Heart right ventricle (tissue), 16 donors: ENCODE measurements at regions of chr14 and their contacts with region 1.

Region 1: DNA sequence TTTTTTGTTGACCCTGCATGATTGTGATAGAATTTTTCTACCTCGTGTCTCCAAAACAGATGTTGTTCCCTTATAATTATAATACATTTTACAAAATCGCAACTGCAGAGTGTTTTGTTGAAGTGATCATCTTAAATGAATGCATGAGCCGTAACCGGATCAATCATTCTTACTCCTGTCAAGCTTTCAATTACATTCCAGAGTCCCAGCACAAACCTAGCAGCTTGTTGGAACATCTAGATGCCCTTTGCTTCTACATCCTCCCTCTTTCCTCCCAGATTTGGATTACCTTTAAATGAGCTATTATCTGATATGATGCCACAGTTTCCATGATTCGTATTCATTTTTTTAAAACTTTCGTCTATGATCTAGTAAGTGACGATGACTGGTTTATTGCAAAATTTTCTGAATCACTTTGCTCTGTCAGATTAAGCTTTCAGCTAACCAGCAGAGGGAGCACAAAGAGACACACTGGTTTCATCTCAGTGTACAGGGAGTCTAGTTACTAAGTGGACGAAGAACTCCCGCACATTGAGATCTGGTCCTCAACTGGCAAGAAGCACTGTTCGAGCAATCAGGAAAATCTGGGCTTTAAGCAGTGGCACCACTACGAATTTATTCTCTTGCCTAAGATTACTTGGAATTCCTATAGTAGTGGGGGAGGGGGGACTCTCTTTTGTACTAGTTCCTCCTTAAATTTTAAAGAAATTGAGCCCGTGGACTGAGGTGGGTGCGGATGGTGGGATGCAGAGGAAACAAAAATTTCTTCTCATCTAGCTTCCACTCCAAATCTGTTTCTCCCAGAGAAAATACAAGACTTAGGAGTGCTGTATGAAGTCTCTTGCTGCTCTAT is 40.9 kb downstream of the TSHR start:
- DNase-seq: peak in 1 of 2 donors; percentile 59
- ATAC-seq: peak; percentile 72 to 95 (median 90)
- H3K4me3 ChIP-seq: no peak overlapping the region
- H3K27ac ChIP-seq: no peak overlapping the region
- H3K4me1 ChIP-seq: peaks cover 0 to 12% (median 0%) of the 10 kb centered on the region in 9 donors
- H3K27me3 ChIP-seq: peaks cover 0 to 17% (median 0%) of the 10 kb centered on the region in 7 donors
- CTCF ChIP-seq: peak in 8 of 9 donors; percentile 40 to 77 (median 68)

Region 2: DNA sequence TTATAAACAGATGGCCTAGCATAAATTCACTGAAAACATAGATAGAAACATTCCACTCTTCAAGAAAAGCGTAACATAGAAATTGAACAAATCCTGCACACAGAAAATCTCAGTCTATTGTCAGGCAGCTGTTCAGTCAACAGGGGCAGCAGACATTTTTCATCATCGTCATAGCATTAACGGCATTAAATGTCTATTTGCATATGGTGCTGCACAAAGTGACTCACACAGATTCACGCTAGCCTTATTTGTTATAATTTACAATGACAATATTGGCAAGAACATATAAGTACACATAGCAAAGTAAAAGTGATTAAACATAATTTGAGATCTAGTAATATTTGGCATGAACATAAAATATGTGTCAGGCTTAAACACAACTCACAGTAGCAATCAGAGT is 150.4 kb before region 1 on chr14:
- intact Hi-C with region 1: no loop called
- DNase-seq: no peak
- ATAC-seq: no peak
- H3K4me3 ChIP-seq: no peak overlapping the region
- H3K27ac ChIP-seq: no peak overlapping the region
- H3K4me1 ChIP-seq: peaks cover 0 to 13% (median 0%) of the 10 kb centered on the region in 9 donors
- H3K27me3 ChIP-seq: no peaks in the 10 kb centered on the region
- CTCF ChIP-seq: no peak

Region 3: GRCh38 chr14:80954687-80955299 is 41.5 kb before region 1 on chr14:
- intact Hi-C with region 1: no loop called
- DNase-seq: peak; percentile 70 to 82
- ATAC-seq: peak; percentile 89 to 96 (median 93)
- H3K4me3 ChIP-seq: peak overlapping the region; percentile 32 to 64 (median 53)
- H3K27ac ChIP-seq: peak overlapping the region in 1 of 10 donors; percentile 62
- H3K4me1 ChIP-seq: peaks cover 0 to 24% (median 9%) of the 10 kb centered on the region in 9 donors
- H3K27me3 ChIP-seq: peaks cover 0 to 29% (median 15%) of the 10 kb centered on the region in 7 donors
- CTCF ChIP-seq: peak; percentile 75 to 88 (median 79)

Region 4: DNA sequence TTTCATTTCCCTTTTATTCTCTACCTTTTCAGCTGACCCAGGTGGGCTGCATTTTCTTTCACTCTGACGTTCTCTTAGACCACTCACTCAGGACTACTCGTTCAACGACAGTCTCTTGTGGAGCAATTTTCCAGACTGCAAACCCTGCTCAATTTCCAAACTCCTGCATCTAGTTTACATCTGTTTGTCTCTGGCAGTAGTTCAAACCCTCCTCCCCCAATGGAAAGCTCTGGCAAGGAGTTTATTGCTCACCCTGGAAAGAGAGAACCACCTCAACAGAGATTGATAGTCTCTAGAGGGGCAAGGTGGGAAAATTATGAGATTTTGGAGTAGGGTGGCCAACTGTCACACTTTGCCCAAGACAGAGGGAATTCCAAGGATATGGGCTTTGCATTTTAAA is 89.3 kb after region 1 on chr14:
- intact Hi-C with region 1: no loop called
- DNase-seq: no peak
- ATAC-seq: no peak
- H3K4me3 ChIP-seq: no peak overlapping the region
- H3K27ac ChIP-seq: no peak overlapping the region
- H3K4me1 ChIP-seq: no peaks in the 10 kb centered on the region
- H3K27me3 ChIP-seq: no peaks in the 10 kb centered on the region
- CTCF ChIP-seq: no peak

Region 5: GRCh38 chr14:81164167-81164774 is 168.0 kb after region 1 on chr14:
- intact Hi-C with region 1: loop called in 4 of 10 experiments (anchors 2 to 10 kb)
- DNase-seq: peak in 1 of 2 donors; percentile 44
- ATAC-seq: peak; percentile 61 to 95 (median 90)
- H3K4me3 ChIP-seq: no peak overlapping the region
- H3K27ac ChIP-seq: peak overlapping the region in 1 of 10 donors; percentile 23
- H3K4me1 ChIP-seq: peaks cover 0 to 18% (median under 1%) of the 10 kb centered on the region in 9 donors
- H3K27me3 ChIP-seq: no peaks in the 10 kb centered on the region
- CTCF ChIP-seq: peak in 8 of 9 donors; percentile 23 to 66 (median 50)

Region 6: GRCh38 chr14:81200054-81200453 is 203.8 kb after region 1 on chr14:
- intact Hi-C with region 1: no loop called
- DNase-seq: no peak
- ATAC-seq: no peak
- H3K4me3 ChIP-seq: no peak overlapping the region
- H3K27ac ChIP-seq: no peak overlapping the region
- H3K4me1 ChIP-seq: peaks cover 0 to 10% (median 4%) of the 10 kb centered on the region in 9 donors
- H3K27me3 ChIP-seq: no peaks in the 10 kb centered on the region
- CTCF ChIP-seq: no peak

Region 7: GRCh38 chr14:81211844-81212243 is 215.6 kb after region 1 on chr14:
- intact Hi-C with region 1: loop called in 5 of 10 experiments (anchors 5 to 10 kb)
- DNase-seq: peak; percentile 27 to 29
- ATAC-seq: peak; percentile 68 to 86 (median 80)
- H3K4me3 ChIP-seq: no peak overlapping the region
- H3K27ac ChIP-seq: peak overlapping the region in 1 of 10 donors; percentile 10
- H3K4me1 ChIP-seq: peaks cover 0 to 32% (median 20%) of the 10 kb centered on the region in 9 donors
- H3K27me3 ChIP-seq: no peaks in the 10 kb centered on the region
- CTCF ChIP-seq: peak in 8 of 9 donors; percentile 7 to 66 (median 53)

Region 8: GRCh38 chr14:81453166-81453766 is 457.0 kb after region 1 on chr14:
- intact Hi-C with region 1: loop called in 1 of 10 experiments (anchors 10 kb)
- DNase-seq: peak in 1 of 2 donors; percentile 51
- ATAC-seq: peak in 2 of 8 donors; percentile 26 to 44
- H3K4me3 ChIP-seq: no peak overlapping the region
- H3K27ac ChIP-seq: peak overlapping the region in 1 of 10 donors; percentile 19
- H3K4me1 ChIP-seq: peaks cover 0 to 26% (median 16%) of the 10 kb centered on the region in 9 donors
- H3K27me3 ChIP-seq: peaks cover 0 to 24% (median 10%) of the 10 kb centered on the region in 7 donors
- CTCF ChIP-seq: peak; percentile 50 to 88 (median 83)